Ascending aorta (tissue), 2 donors: ENCODE measurements at regions of chr12 and their contacts with region 1.

Region 1: DNA sequence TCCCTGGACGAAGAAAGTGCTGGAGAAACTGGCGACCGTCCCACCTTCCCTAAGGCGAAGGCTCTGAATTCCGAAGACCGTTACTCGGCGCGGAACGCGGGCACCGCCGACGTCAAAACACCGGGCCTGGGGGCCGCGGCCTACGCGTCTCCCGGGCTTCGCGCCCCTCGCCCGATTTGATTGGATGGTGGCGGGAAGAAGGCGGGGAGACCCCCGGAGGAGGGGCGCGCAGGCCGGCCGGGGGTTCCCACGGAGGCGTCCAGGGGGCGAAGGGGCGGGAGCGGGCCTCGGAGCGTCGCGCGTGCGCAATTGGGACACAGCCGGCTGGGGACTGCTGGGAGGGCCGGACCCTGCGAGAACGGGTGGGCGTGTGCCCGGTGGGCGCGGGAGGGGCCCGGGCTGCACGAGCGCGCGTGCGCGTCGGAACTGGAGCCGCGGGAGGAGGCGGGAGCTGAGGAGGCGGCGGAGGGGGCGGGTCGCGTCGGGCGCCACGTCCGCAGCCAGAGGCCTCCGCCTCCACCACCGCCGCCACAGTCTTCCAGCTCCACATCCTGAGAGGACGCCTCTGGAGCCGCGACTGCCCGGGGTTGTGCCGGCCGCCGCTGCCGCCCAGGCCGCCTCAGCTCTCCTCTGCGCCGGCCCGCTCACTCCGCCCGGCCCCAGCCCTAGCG is at the start of gene TMEM263:
- DNase-seq: peak; percentile 72 to 96
- H3K4me3 ChIP-seq: peak within 1 kb of the TSS; percentile 85 to 99
- H3K27ac ChIP-seq: peak within 1 kb of the TSS; percentile 99
- H3K4me1 ChIP-seq: peaks cover 0 to 20% of the 10 kb centered on the region in 2 donors
- H3K27me3 ChIP-seq: no peaks in the 10 kb centered on the region
- CTCF ChIP-seq: peak in 1 of 3 experiments; percentile 40
- total RNA-seq, gene TMEM263: 27.0 TPM

Region 2: DNA sequence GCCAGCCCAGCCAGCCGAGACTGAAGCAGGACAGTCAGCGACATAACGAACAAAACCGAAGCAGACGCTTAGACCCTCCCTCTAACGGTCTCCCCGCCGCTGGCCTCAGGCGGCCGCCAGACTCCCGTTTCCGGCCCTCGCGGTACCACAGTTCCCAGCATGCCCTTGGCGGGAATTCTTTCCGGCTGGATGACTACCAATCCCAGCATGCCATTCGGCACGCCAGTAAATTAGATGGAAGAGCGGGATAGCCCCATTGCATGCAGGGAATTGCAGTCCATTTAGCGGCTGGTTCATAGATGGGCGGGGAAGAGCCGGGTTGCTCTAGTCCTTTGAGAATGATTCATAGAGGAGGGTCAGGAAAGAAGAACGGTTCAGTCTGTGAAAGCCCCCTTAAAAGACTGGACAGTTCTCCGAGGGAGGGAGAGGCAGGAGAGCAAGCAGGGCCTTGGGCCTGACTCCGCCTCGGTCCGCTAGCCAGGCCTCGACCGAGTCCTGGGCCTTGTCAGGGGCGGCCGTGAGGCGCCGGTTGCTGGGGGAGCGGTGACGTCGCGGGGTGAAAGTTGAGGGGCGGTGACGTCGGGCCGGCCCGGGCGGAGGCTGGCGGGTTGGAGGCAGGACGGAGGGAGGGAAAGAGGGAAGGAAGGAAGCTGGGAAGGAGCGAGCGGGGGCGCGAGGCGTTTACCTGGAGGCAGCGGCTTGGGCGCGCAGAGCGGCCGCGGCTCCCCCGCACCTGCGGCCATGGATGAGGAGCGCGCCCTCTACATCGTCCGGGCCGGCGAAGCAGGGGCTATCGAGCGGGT is 181.3 kb before region 1 on chr12 and contains the start of gene RIC8B:
- intact Hi-C with region 1: loop called (anchors 1 kb)
- DNase-seq: peak; percentile 83 to 98
- H3K4me3 ChIP-seq: peak within 1 kb of the TSS; percentile 68 to 72
- H3K27ac ChIP-seq: peak within 1 kb of the TSS; percentile 95 to 98
- H3K4me1 ChIP-seq: peaks cover 0 to 26% of the 10 kb centered on the region in 2 donors
- H3K27me3 ChIP-seq: no peaks in the 10 kb centered on the region
- CTCF ChIP-seq: no peak
- total RNA-seq, gene RIC8B: 19.1 TPM

Region 3: DNA sequence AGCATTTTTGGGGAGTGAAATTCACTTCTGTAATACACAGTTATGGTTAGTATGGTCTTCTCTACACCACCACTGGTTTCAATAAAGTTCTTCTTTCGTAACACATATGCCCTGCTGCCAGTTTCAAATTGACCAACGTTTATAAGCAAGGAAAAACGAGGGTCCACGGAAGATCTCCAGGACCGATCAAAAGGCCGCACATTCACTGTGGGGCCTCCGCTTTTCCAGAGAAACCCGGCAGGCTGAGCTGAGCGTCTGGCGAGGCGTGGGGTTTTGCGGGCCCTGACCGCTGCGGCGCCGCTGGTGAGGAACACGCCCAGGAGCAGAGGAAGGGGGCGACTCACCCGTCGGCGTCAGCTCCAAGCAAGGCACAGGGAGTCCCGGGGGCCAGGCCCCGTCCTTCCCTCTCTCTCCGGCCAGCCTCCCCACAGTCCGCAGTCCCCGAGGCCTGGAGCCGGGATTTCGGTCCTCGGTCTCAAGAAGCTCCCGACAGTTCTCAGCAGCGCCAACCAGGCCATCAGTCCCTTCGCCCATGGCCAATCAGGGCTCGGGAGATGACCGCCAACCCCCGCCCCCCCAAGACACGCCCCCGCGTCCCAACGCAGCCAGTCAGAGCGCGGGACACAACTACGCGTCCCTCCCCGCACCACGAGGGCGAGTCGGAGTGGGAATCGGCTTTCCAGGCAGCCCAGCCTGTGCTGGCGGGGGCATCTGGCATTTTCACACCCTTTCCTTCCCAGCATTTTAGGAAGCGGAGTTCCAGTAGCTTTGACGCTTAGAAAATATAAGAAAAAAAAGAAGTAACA is 31.3 kb after region 1 on chr12 and contains the start of gene MTERF2:
- intact Hi-C with region 1: loop called (anchors 1 kb)
- DNase-seq: peak; percentile 71 to 97
- H3K4me3 ChIP-seq: peak within 1 kb of the TSS; percentile 69 to 77
- H3K27ac ChIP-seq: peak within 1 kb of the TSS; percentile 91 to 93
- H3K4me1 ChIP-seq: peaks cover 12 to 16% of the 10 kb centered on the region in 2 donors
- H3K27me3 ChIP-seq: no peaks in the 10 kb centered on the region
- CTCF ChIP-seq: no peak
- total RNA-seq, gene MTERF2: 3.1 TPM